Ascending aorta (tissue), 2 donors: ENCODE measurements at regions of chr3 and their contacts with region 1.

Region 1: DNA sequence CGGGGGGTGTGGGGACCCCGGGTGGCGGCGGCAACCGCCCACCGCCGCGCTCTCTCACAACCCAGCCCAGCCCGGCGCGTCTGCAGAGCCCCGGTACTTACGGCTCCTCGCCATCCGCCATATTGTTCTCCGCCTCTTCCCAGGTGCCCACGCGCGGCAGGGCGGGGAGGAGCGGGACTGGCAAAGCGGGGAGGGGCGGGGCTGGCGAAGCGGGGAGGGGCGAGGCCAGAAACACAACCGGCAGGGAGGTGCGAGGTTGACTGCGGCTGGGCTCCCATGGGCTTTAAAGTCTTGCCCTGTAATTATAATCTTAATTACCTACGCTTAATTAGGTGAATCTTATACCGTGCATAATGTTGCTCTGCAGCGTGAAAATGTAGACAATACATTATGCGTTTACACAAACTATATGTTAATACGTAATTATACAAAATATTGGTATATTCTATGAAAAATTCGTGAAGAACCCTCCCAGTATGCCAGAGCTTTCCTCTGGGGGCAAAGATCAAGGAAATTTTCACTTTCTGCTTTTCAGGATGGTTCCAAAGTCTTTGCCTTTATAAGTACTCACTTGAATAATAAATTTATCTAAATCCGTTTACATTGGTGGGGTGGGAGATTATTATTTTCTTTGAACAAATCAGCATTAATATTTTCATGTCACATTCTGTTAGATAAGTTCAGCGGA is at the start of gene UBA3:
- DNase-seq: peak; percentile 64 to 95
- H3K4me3 ChIP-seq: peak within 1 kb of the TSS; percentile 71 to 93
- H3K27ac ChIP-seq: peak within 1 kb of the TSS; percentile 75 to 78
- H3K4me1 ChIP-seq: peaks cover 10 to 32% of the 10 kb centered on the region in 2 donors
- H3K27me3 ChIP-seq: no peaks in the 10 kb centered on the region
- CTCF ChIP-seq: no peak
- total RNA-seq, gene UBA3: 18.2 TPM

Region 2: DNA sequence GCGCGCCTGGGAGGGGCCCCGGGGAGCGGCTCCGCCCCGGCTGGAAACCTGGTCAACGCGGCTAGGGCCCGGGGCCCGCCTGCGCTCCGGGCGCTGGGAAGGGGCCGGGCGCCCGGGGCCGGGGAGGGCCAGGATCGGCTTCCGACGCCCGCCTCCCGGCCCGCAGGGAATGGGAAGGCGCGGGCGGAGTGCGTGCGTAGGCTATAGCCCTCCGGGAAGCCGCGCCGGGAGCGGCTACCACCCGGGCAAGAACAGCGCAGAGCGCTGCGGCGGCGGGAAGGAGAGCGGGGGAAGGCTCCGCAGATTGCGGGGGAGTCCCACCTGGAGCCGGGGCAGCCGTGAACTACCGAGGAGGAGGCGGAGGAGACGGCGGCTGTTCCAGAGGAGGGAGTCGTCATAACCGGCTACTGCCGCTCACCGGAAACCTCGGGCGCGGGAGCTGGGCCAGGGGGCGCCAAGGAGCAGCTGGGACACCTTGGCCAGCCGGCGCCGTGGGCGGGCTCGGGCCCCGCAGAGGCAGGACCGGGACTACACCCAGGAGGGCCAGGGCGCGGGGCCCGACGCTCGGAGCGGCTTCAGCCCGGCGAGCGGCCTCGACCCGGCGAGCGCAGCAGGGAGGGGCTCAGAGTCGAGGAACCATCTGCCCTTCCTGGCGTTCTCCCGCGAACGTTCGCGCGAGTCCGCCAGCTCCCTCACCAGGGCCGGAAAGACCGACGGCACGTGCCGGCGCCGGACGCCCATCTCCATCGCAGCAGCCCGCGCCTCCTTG is 66.9 kb before region 1 on chr3 and contains the start of gene EOGT:
- intact Hi-C with region 1: loop called (anchors 1 kb)
- DNase-seq: peak; percentile 67 to 94
- H3K4me3 ChIP-seq: peak within 1 kb of the TSS; percentile 77 to 91
- H3K27ac ChIP-seq: peak within 1 kb of the TSS; percentile 99 to 100
- H3K4me1 ChIP-seq: peaks cover 0 to 31% of the 10 kb centered on the region in 2 donors
- H3K27me3 ChIP-seq: no peaks in the 10 kb centered on the region
- CTCF ChIP-seq: peak; percentile 64 to 70 (median 69)
- total RNA-seq, gene EOGT: 50.4 TPM